WTC11 (cell line): ENCODE measurements at regions of chr17 and their contacts with region 1.

Region 1: DNA sequence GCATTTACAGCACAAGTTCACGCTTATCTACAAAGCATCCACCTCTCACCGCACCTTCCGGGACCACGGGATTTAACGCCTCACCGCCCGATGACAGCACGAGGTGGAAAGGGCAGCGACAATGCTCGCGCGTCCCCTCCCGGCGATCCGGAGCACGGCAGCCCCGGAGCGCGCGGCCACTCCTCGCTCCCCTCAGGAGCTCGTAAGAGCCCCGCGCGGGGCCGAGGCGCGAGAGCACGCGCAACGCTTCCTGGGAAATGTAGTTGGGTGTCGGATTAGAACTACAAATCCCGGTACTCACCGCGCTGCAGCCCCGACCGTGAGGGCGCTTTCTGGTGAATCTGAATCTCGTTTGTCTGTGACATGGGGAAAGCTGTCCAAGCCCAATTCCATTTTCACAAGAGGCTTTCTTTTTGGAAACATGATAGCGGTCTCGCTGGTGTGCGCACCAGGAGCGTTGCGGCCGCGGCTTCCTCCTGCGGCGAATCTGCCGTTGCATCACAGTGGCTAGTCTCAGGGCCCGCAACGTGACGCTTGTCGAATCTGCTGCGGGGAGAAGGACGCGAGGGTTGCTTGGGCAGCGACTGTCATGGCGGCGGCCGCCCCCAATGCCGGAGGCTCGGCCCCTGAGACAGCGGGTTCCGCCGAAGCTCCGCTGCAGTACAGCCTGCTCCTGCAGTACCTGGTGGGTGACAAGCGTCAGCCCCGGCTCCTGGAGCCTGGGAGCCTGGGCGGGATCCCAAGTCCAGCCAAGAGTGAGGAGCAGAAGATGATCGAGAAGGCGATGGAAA is at the start of gene TIMM22:
- DNase-seq: peak; percentile 96
- ATAC-seq: peak; percentile 97
- H3K4me3 Mint-ChIP-seq: peak within 1 kb of the TSS; percentile 90
- H3K27ac Mint-ChIP-seq: peak within 1 kb of the TSS; percentile 99
- H3K4me1 Mint-ChIP-seq: peaks cover 8% of the 10 kb centered on the region
- H3K27me3 Mint-ChIP-seq: peaks cover 19% of the 10 kb centered on the region
- CTCF ChIP-seq: peak; percentile 79
- total RNA-seq, gene TIMM22: 17.2 to 18.0 TPM (median 17.4 TPM) in 3 replicates

Region 2: GRCh38 chr17:716238-716637 is 280.5 kb before region 1 on chr17:
- CTCF ChIA-PET with region 1: interaction called, 15 read pairs
- POLR2A ChIA-PET with region 1: interaction called, 3 read pairs
- DNase-seq: no peak
- ATAC-seq: no peak
- H3K4me3 Mint-ChIP-seq: no peak overlapping the region
- H3K27ac Mint-ChIP-seq: no peak overlapping the region
- H3K4me1 Mint-ChIP-seq: peaks cover 7% of the 10 kb centered on the region
- H3K27me3 Mint-ChIP-seq: no peaks in the 10 kb centered on the region
- CTCF ChIP-seq: no peak

Region 3: DNA sequence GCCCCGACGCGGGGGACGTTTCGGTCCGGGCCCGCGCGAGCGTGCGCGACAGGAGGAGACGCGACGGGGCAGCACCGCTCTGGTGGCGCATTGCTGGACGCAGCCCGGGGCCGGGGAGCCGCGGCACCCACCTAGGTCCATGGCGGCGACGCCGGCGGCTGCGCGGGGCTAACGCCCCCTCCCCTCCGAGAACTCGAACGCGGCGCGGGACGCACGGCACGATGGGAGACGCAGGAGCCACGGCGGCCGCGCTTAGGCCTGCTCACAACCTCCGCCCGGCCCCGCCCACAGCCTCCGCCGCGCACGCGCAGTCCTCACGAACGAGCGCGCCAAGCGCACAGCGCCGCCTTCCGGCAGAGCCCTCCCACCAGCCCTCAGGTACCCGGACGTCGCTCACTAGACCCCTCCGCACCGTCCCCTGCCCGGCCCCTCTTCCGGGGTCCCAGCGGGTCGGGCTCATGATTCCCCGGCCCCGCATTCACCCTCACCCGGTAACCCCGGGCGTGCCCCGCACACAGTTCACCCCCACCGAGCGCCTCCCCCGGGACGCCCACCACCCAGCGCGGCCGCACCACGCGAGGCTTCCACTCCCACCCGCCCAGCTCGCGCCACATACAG is 244.6 kb before region 1 on chr17 and contains the start of gene GEMIN4:
- CTCF ChIA-PET with region 1: interaction called, 10 read pairs
- POLR2A ChIA-PET with region 1: no interaction called
- DNase-seq: peak; percentile 96
- ATAC-seq: peak; percentile 93
- H3K4me3 Mint-ChIP-seq: peak within 1 kb of the TSS; percentile 94
- H3K27ac Mint-ChIP-seq: peak within 1 kb of the TSS; percentile 94
- H3K4me1 Mint-ChIP-seq: peaks cover 25% of the 10 kb centered on the region
- H3K27me3 Mint-ChIP-seq: no peaks in the 10 kb centered on the region
- CTCF ChIP-seq: peak; percentile 67
- total RNA-seq, gene GEMIN4: 39.9 to 48.4 TPM (median 42.1 TPM) in 3 replicates

Region 4: GRCh38 chr17:781805-782731 is 214.7 kb before region 1 on chr17 and contains the starts of genes GLOD4 and MRM3:
- CTCF ChIA-PET with region 1: interaction called, 15 read pairs
- POLR2A ChIA-PET with region 1: no interaction called
- DNase-seq: peak; percentile 92
- ATAC-seq: peak; percentile 88
- H3K4me3 Mint-ChIP-seq: peak within 1 kb of the TSS; percentile 96
- H3K27ac Mint-ChIP-seq: peak within 1 kb of the TSS; percentile 98
- H3K4me1 Mint-ChIP-seq: peaks cover 18% of the 10 kb centered on the region
- H3K27me3 Mint-ChIP-seq: no peaks in the 10 kb centered on the region
- CTCF ChIP-seq: no peak
- total RNA-seq, gene GLOD4: 69.0 to 73.3 TPM (median 69.1 TPM) in 3 replicates
- total RNA-seq, gene MRM3: 23.1 to 25.0 TPM (median 24.3 TPM) in 3 replicates

Region 5: GRCh38 chr17:794876-795275 is 201.9 kb before region 1 on chr17:
- CTCF ChIA-PET with region 1: interaction called, 53 read pairs
- POLR2A ChIA-PET with region 1: interaction called, 3 read pairs
- DNase-seq: peak; percentile 81
- ATAC-seq: peak; percentile 60
- H3K4me3 Mint-ChIP-seq: no peak overlapping the region
- H3K27ac Mint-ChIP-seq: peak overlapping the region; percentile 92
- H3K4me1 Mint-ChIP-seq: peaks cover 10% of the 10 kb centered on the region
- H3K27me3 Mint-ChIP-seq: no peaks in the 10 kb centered on the region
- CTCF ChIP-seq: peak; percentile 50

Region 6: DNA sequence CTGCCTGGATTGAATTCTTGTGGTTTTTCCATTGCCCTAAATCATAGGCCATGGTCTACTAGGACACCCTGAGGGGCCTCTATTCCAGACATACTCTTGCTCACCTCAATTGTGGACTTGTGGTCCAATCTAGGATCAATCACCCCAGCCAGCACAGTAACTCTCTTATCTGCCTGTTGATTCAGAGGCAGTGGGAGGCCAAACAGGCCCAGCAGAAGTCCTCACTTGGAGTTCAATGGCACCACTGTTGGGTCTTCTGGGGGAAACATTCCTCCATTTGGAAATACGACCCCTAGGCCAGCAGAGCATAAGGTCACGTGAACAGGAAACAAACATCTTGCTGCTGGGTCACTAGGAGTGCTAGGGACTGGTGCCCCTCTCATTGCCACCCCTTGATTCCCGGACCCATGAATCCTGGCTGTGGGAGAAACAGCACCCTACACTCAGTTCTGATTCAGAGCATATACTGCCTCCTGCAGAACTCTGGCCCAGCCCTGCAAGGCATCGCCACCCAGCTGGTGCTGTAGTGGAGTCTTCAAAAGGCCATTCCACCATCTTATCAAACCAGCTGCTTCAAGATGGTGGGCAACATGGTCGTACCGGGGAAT is 10.3 kb before region 1 on chr17:
- CTCF ChIA-PET with region 1: interaction called, 58 read pairs
- POLR2A ChIA-PET with region 1: no interaction called
- DNase-seq: no peak
- ATAC-seq: no peak
- H3K4me3 Mint-ChIP-seq: no peak overlapping the region
- H3K27ac Mint-ChIP-seq: no peak overlapping the region
- H3K4me1 Mint-ChIP-seq: no peaks in the 10 kb centered on the region
- H3K27me3 Mint-ChIP-seq: no peaks in the 10 kb centered on the region; the same call in 1 of the 2 replicates
- CTCF ChIP-seq: no peak

Region 7: GRCh38 chr17:1039511-1040215 is 42.9 kb after region 1 on chr17:
- CTCF ChIA-PET with region 1: interaction called, 12 read pairs
- POLR2A ChIA-PET with region 1: no interaction called
- DNase-seq: no peak
- ATAC-seq: peak; percentile 38
- H3K4me3 Mint-ChIP-seq: no peak overlapping the region
- H3K27ac Mint-ChIP-seq: peak overlapping the region; percentile 63; the same call in 1 of the 2 replicates
- H3K4me1 Mint-ChIP-seq: peaks cover 5% of the 10 kb centered on the region
- H3K27me3 Mint-ChIP-seq: no peaks in the 10 kb centered on the region
- CTCF ChIP-seq: no peak

Region 8: DNA sequence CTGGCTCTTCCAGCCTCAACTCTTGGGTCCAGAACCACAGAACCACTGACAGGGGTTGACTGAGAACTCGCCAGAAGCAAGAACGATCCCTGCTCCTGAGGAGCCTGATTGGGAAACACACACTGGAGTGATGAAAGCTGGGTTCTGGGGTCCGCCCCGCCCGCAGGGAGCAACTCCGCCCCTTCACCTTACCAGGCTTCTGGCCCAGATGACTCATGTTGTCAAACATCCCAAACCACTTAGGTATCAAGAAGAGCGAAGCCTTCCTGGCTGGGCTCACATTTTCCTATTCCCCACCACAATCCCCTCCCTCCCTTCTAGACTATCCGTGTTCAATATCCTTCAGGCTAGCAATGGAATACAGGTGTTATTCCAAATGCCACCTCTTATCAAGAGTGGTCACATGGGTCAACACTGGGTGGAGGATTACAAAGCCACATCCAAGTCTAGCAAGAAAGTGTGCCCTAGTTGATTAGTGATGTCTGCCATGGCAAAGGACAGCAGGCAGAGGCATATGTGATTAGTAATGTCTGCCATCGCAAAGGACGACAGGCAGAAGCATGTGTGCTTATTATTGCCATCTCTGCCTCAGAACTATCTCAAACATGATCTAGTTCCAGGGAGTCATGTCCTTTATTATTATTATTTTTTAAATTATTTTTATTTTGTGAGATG is 70.7 kb after region 1 on chr17:
- CTCF ChIA-PET with region 1: no interaction called
- POLR2A ChIA-PET with region 1: no interaction called
- DNase-seq: no peak
- ATAC-seq: no peak
- H3K4me3 Mint-ChIP-seq: no peak overlapping the region
- H3K27ac Mint-ChIP-seq: no peak overlapping the region
- H3K4me1 Mint-ChIP-seq: no peaks in the 10 kb centered on the region
- H3K27me3 Mint-ChIP-seq: 0 out of 2 replicates have a peak, but pooled peaks cover 2% of the 10 kb centered on the region
- CTCF ChIP-seq: no peak